K562 (cell line): ENCODE measurements at regions of chr11 and their contacts with region 1.

Region 1: GRCh38 chr11:9613118-9613829 is 39.8 kb downstream of the WEE1 start:
- DNase-seq: peak; percentile 88 to 97 (median 92)
- ATAC-seq: peak; percentile 90
- H3K4me3 ChIP-seq: peak overlapping the region; percentile 46
- H3K27ac ChIP-seq: peak overlapping the region; percentile 95
- H3K4me1 ChIP-seq: peaks cover 19 to 21% of the 10 kb centered on the region in 2 experiments; a peak in 4 of 5 replicates
- H3K27me3 ChIP-seq: no peaks in the 10 kb centered on the region
- CTCF ChIP-seq: peak; percentile 94 to 98 (median 97)
- EP300 ChIP-seq: peak; percentile 64
- POLR2A ChIP-seq: peak; percentile 65
- RAD21 ChIP-seq: peak; percentile 93

Region 2: DNA sequence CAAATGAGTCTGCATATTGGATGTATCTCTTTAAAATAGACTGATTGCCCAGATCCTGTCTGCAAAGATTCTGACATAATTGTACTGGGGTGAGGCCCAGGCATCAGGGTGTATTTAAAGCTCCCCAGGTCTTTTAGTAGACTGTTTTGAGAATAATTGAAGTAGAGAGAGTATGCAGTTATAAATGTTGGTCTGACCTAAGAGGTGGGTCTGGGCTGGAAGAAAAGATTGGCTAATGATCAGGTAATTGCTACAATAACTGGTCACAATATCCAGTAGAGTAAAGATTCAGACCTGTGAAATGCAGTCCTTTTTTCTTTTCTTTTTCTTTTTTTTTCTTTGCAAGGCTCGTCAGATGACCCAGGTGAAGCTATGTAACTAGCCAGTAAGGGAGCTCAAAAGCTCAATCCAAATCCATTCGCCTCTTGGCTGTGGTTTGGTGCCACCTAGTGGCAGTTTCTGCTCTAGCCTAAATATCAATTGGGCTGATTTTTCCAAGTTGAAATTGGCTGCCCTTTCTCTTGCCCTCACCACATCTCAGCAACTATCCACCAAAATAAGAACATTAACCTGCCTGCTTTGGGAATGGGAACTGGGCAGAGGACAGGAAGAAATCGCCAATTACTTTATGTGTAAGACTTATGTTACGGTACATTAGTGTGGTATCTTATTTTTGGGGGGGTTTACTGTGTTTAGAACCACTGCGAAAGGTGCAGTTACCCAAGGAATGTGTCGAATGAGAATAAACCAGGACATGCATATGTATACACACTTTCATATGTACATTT is 106.6 kb before region 1 on chr11:
- CTCF ChIA-PET with region 1: no interaction called
- POLR2A ChIA-PET with region 1: no interaction called
- in situ Hi-C with region 1: no loop called
- intact Hi-C with region 1: loop called (anchors 2 kb)
- DNase-seq: peak; percentile 61 to 87 (median 71)
- ATAC-seq: peak; percentile 97
- H3K4me3 ChIP-seq: no peak overlapping the region
- H3K27ac ChIP-seq: no peak overlapping the region
- H3K4me1 ChIP-seq: no peaks in the 10 kb centered on the region
- H3K27me3 ChIP-seq: no peaks in the 10 kb centered on the region
- CTCF ChIP-seq: peak; percentile 85 to 94 (median 86)
- EP300 ChIP-seq: no peak
- POLR2A ChIP-seq: no peak
- RAD21 ChIP-seq: peak; percentile 87 to 94

Region 3: DNA sequence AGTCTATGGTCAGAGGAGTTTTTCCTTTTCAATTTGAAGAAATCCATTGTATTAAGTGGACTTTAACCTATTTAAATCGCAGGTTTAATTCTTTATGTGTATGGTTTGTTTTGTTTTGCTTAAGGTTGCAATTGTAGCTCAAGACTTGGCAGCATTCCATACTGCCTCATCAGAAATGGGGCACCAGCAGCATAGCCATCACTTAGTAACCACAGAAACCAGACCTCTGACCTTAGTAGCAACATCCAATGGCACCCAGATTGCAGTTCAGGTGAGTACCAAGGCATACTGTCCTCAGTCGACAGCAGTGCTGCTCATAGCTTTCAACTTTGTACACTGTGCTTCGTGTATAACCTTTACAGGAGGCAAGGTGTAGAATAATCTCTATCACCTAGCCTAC is 88.2 kb before region 1 on chr11:
- CTCF ChIA-PET with region 1: no interaction called
- POLR2A ChIA-PET with region 1: no interaction called
- in situ Hi-C with region 1: no loop called
- intact Hi-C with region 1: no loop called
- DNase-seq: no peak
- ATAC-seq: no peak
- H3K4me3 ChIP-seq: no peak overlapping the region
- H3K27ac ChIP-seq: no peak overlapping the region
- H3K4me1 ChIP-seq: peaks cover 11 to 13% of the 10 kb centered on the region in 2 experiments; a peak in 4 of 5 replicates
- H3K27me3 ChIP-seq: no peaks in the 10 kb centered on the region
- CTCF ChIP-seq: no peak
- EP300 ChIP-seq: no peak
- POLR2A ChIP-seq: no peak
- RAD21 ChIP-seq: no peak

Region 4: DNA sequence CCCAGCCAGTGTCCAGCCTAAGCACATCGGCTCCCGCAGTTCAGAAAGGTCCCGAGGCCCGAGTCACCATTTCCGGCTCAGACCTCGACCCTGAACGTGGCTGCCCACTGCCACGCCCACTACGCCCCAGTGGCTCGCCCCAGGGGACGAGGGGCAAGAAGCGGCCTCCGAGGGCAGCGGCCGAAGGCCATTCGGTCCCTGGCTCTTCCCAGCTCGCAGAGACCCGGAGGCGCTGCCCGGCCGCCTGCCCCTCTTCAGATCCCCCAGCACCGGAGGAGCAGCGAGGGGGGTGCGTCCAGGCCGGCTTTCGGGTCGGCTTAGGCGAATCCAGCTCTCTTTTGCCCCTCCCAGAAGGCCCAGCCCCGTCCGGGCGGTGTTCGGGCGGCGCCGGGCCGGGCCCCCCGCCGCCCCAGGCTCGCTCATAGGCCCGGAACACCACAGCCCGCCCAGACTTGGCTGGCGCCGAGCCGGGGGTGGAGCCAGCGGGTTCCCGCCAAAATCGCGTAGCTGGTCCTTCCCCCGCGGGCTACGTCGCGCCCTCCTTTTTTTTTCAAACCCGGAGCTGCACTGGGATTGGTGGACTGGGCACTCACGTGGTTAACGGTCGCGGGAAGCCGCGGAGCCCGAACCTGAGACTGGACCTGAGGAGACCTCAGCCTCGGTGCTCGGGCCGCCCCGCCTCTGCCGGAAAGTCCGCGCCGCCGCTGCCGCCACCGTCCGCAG is 40.1 kb before region 1 on chr11 and contains the start of gene WEE1:
- CTCF ChIA-PET with region 1: no interaction called
- POLR2A ChIA-PET with region 1: interaction called, 6 read pairs
- in situ Hi-C with region 1: no loop called
- intact Hi-C with region 1: loop called (anchors 2 kb)
- DNase-seq: peak; percentile 94 to 98 (median 96)
- ATAC-seq: peak; percentile 94
- H3K4me3 ChIP-seq: peak within 1 kb of the TSS; percentile 92
- H3K27ac ChIP-seq: peak within 1 kb of the TSS; percentile 98
- H3K4me1 ChIP-seq: peaks cover 33 to 35% of the 10 kb centered on the region in 2 experiments
- H3K27me3 ChIP-seq: no peaks in the 10 kb centered on the region
- CTCF ChIP-seq: no peak
- EP300 ChIP-seq: peak; percentile 43; the same call in 1 of the 2 replicates
- POLR2A ChIP-seq: peak; percentile 92
- RAD21 ChIP-seq: no peak
- polyA plus RNA-seq, gene WEE1: 21.9 to 30.6 TPM

Region 5: GRCh38 chr11:9825315-9825714 is 212.0 kb after region 1 on chr11:
- CTCF ChIA-PET with region 1: no interaction called
- POLR2A ChIA-PET with region 1: no interaction called
- in situ Hi-C with region 1: no loop called
- intact Hi-C with region 1: no loop called
- DNase-seq: no peak
- ATAC-seq: no peak
- H3K4me3 ChIP-seq: no peak overlapping the region
- H3K27ac ChIP-seq: no peak overlapping the region
- H3K4me1 ChIP-seq: no peaks in the 10 kb centered on the region
- H3K27me3 ChIP-seq: no peaks in the 10 kb centered on the region; a peak in 1 of 5 replicates
- CTCF ChIP-seq: no peak
- EP300 ChIP-seq: no peak
- POLR2A ChIP-seq: no peak
- RAD21 ChIP-seq: no peak

Region 6: GRCh38 chr11:9972989-9973388 is 359.7 kb after region 1 on chr11:
- CTCF ChIA-PET with region 1: no interaction called
- POLR2A ChIA-PET with region 1: interaction called, 3 read pairs
- in situ Hi-C with region 1: no loop called
- intact Hi-C with region 1: loop called (anchors 10 kb)
- DNase-seq: peak; percentile 39 to 61 (median 48)
- ATAC-seq: peak; percentile 82
- H3K4me3 ChIP-seq: no peak overlapping the region
- H3K27ac ChIP-seq: no peak overlapping the region
- H3K4me1 ChIP-seq: no peaks in the 10 kb centered on the region
- H3K27me3 ChIP-seq: no peaks in the 10 kb centered on the region
- CTCF ChIP-seq: peak; percentile 66 to 91 (median 71)
- EP300 ChIP-seq: no peak
- POLR2A ChIP-seq: no peak
- RAD21 ChIP-seq: peak; percentile 81 to 93